Activated CD4-positive, alpha-beta memory T cell treated with anti-CD3 and anti-CD28 coated beads for 36 hours (primary cell): ENCODE measurements at regions of chr4 and their contacts with region 1.

Region 1: GRCh38 chr4:95248720-95249425 is 299.9 kb downstream of the UNC5C start:
- DNase-seq: peak; percentile 19
- H3K4me3 Mint-ChIP-seq: no peak overlapping the region
- H3K27ac Mint-ChIP-seq: peak overlapping the region; percentile 75
- H3K4me1 Mint-ChIP-seq: peaks cover 22% of the 10 kb centered on the region
- H3K27me3 Mint-ChIP-seq: peaks cover 1% of the 10 kb centered on the region

Region 2: GRCh38 chr4:95232358-95233156 is 16.3 kb before region 1 on chr4:
- CTCF ChIA-PET with region 1: no interaction called
- POLR2A ChIA-PET with region 1: interaction called, 5 read pairs
- intact Hi-C with region 1: loop called (anchors 1 kb)
- DNase-seq: peak; percentile 24
- H3K4me3 Mint-ChIP-seq: no peak overlapping the region
- H3K27ac Mint-ChIP-seq: peak overlapping the region; percentile 20
- H3K4me1 Mint-ChIP-seq: peaks cover 4% of the 10 kb centered on the region
- H3K27me3 Mint-ChIP-seq: no peaks in the 10 kb centered on the region

Region 3: DNA sequence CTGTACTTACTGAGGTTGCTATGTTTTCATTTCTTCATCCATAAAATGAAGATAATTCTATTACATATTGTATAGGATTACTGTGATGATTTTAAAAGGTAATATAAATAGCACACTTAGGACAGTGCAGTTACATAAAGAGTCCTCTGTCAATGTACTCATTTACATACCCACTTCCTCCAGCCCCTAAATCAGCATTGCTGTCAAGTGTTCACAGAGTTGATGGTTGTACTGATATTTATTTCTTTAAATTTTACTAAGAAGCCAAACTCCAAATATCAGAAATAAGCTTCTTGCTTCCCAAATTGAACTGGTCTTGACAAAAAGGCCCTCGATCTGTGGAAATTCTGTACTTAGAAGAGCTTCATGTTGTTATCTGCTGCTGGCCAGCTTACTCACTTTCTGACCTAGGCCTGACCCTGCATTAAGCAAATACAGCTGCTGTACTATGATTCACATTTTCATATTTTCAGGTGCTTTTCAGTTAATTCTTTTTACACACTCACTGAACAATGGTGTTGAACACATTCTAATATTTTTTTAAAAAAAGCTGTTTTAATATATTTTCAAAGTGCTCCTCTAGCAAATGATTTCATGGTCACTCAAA is 40.3 kb after region 1 on chr4:
- CTCF ChIA-PET with region 1: no interaction called
- POLR2A ChIA-PET with region 1: no interaction called
- intact Hi-C with region 1: loop called (anchors 1 kb)
- DNase-seq: no peak
- H3K4me3 Mint-ChIP-seq: no peak overlapping the region
- H3K27ac Mint-ChIP-seq: no peak overlapping the region
- H3K4me1 Mint-ChIP-seq: peaks cover 30% of the 10 kb centered on the region
- H3K27me3 Mint-ChIP-seq: no peaks in the 10 kb centered on the region

Region 4: GRCh38 chr4:95510145-95510544 is 261.3 kb after region 1 on chr4:
- CTCF ChIA-PET with region 1: no interaction called
- POLR2A ChIA-PET with region 1: no interaction called
- intact Hi-C with region 1: loop called (anchors 1 kb)
- DNase-seq: no peak
- H3K4me3 Mint-ChIP-seq: no peak overlapping the region
- H3K27ac Mint-ChIP-seq: no peak overlapping the region
- H3K4me1 Mint-ChIP-seq: peaks cover 5% of the 10 kb centered on the region
- H3K27me3 Mint-ChIP-seq: peaks cover 3% of the 10 kb centered on the region